Common myeloid progenitor, CD34-positive (primary cell): ENCODE measurements at regions of chr12 and their contacts with region 1.

Region 1: DNA sequence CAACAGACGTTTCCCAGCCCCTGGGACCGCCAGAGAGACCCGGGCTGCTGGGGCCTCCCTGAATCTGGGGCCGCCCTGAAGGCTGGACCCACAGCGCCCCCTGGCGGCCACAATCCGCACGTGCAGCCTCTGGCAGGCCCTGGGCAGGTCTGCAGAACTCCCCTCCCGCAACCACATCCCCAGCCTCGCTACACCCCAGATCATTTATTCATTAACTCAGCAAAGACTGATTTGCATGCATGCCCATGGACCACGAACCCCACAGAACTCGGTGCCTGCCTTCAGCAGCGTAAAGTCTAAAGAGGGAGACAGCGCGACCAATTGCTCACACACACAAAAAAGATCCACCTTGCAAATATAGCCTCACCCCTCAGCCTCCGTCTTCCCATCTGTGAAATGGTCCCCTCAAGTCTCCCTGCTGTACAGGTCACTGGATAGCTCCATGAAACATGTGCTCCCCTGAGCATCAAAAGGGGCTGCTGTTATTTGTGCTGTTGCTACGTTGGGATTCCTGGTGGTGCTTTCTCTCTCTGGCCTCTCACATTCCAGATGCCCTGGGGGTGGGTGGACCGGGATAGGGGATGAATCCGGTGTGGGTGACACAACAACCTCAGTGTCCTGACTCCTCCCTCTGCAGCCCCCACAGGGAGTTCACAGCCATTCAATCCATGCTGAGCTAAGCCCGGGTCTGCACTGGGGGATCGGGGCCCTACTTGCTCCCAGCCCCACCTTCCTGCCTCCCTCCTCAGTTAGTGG is 96.4 kb downstream of the SCARB1 start:
- DNase-seq: peak; percentile 73 to 87 (median 86)
- H3K4me3 ChIP-seq: no peak overlapping the region
- H3K27ac ChIP-seq: no peak overlapping the region
- H3K4me1 ChIP-seq: peaks cover 0 to 13% (median 4%) of the 10 kb centered on the region in 4 experiments
- H3K27me3 ChIP-seq: peaks cover 0 to under 1% (median 0%) of the 10 kb centered on the region in 5 experiments

Region 2: DNA sequence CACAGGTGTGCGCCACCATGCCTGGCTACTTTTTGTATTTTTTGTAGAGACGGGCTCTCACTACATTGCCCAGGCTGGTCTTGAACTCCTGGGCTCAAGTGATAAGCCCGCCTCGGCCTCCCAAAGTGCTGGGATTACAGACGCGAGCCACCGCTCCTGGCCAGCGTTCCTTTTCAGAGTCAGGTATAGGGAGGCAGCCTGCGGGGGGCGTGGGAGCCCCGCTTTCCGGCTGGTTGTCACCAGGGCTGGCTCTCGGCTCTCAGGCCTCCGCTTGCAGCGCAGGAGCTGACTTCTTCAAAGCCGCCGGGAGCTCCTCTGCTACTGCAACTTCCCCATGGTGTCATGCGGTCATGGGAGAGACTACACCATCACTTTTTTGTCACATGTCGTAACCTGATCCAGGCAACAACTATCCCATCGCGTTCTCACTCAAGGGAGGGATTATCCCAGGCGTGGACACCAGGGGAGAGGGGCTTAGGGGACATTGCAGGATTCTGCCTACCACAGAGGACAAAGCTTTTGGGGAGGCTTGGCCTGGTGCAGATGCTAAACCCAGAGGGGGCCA is 32.9 kb before region 1 on chr12:
- CTCF ChIA-PET with region 1: interaction called, 35 read pairs
- POLR2A ChIA-PET with region 1: no interaction called
- DNase-seq: peak; percentile 80 to 92 (median 90)
- H3K4me3 ChIP-seq: no peak overlapping the region
- H3K27ac ChIP-seq: no peak overlapping the region
- H3K4me1 ChIP-seq: peaks cover 0 to 32% (median 12%) of the 10 kb centered on the region in 4 experiments
- H3K27me3 ChIP-seq: no peaks in the 10 kb centered on the region

Region 3: DNA sequence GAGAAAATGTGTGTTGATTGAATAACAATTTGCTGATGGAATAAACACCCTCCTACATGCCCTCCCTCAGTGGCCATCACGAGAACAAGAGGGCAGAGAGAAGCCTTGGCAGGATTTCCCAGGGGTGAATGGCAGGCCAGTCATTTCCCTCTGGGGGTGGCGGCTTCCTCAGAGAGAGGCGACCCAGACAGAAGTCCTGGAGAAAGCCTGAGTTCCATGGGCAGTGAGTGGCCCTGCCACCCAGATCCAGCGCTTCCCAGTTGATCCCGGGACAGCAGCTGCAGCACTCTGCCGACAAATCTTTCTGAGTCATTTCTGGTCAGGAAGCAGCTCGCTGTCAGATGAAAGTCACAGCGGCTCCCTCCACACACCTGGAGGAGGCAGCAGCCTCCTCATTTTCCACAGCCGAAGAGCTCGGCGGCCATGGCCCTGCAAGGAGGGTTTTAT is 26.5 kb before region 1 on chr12:
- CTCF ChIA-PET with region 1: interaction called, 35 read pairs
- POLR2A ChIA-PET with region 1: no interaction called
- DNase-seq: peak in 2 of 3 donors; percentile 49 to 62
- H3K4me3 ChIP-seq: peak overlapping the region in 3 of 7 experiments; percentile 5 to 52 (median 41)
- H3K27ac ChIP-seq: no peak overlapping the region
- H3K4me1 ChIP-seq: peaks cover 0 to 35% (median 16%) of the 10 kb centered on the region in 4 experiments
- H3K27me3 ChIP-seq: no peaks in the 10 kb centered on the region

Region 4: GRCh38 chr12:124745891-124746570 is 21.2 kb before region 1 on chr12:
- CTCF ChIA-PET with region 1: interaction called, 37 read pairs
- POLR2A ChIA-PET with region 1: no interaction called
- DNase-seq: peak; percentile 63 to 87 (median 81)
- H3K4me3 ChIP-seq: peak overlapping the region in 4 of 7 experiments; percentile 11 to 65 (median 38)
- H3K27ac ChIP-seq: no peak overlapping the region
- H3K4me1 ChIP-seq: peaks cover 0 to 43% (median 29%) of the 10 kb centered on the region in 4 experiments
- H3K27me3 ChIP-seq: no peaks in the 10 kb centered on the region

Region 5: GRCh38 chr12:124754949-124755800 is 12.1 kb before region 1 on chr12:
- CTCF ChIA-PET with region 1: interaction called, 37 read pairs
- POLR2A ChIA-PET with region 1: no interaction called
- DNase-seq: peak; percentile 71 to 90 (median 87)
- H3K4me3 ChIP-seq: peak overlapping the region in 4 of 7 experiments; percentile 3 to 31 (median 26)
- H3K27ac ChIP-seq: peak overlapping the region in 1 of 2 experiments; percentile 14
- H3K4me1 ChIP-seq: peaks cover 0 to 47% (median 41%) of the 10 kb centered on the region in 4 experiments
- H3K27me3 ChIP-seq: no peaks in the 10 kb centered on the region